H1 (cell line): ENCODE measurements at regions of chr10 and their contacts with region 1.

Region 1: GRCh38 chr10:7687228-7687907 is 15.7 kb upstream of the ITIH2 start:
- DNase-seq: peak; percentile 77 to 80
- H3K4me3 ChIP-seq: no peak overlapping the region
- H3K27ac ChIP-seq: no peak overlapping the region
- H3K4me1 ChIP-seq: no peaks in the 10 kb centered on the region
- H3K27me3 ChIP-seq: no peaks in the 10 kb centered on the region
- CTCF ChIP-seq: peak; percentile 86 to 99 (median 95)
- EP300 ChIP-seq: peak in 1 of 2 experiments; percentile 22; a peak in 1 of 3 replicates
- POLR2A ChIP-seq: no peak
- RAD21 ChIP-seq: peak; percentile 96 to 98

Region 2: DNA sequence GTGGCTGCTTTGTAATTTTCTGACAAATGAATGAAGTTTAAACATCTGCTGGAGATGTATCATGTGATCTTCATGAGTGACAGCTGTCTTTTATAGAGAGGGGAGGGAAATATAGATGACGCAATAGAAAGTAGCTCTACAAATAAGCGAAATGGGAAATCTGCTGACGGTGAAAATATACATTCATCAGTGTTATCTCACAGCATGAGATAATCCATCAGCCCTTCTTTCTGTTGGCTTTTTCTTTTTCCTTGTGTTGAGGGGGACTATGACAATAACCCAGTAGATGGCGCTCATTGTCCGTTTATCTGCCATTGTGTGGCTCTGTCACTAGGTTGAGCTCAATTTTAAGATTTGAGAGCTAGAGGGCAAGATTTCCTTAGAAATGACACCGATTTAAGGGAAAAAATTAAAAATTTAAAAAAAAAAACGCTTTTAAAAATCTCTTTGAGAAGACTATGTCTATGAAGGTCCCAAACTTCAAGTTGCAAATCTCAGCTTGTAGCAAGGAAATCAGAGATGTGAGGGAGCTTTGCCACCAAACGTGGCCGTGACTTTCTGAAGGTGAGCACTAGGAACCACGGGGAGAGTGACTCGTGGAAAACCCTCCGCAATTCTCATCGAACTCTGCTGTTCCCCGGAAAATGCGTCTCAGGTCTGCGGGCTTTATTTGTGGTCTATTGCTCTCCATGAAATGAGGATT is 161.9 kb before region 1 on chr10:
- CTCF ChIA-PET with region 1: interaction called, 88 read pairs
- POLR2A ChIA-PET with region 1: no interaction called
- DNase-seq: peak in 1 of 2 experiments; percentile 67
- H3K4me3 ChIP-seq: no peak overlapping the region
- H3K27ac ChIP-seq: no peak overlapping the region
- H3K4me1 ChIP-seq: no peaks in the 10 kb centered on the region; a peak in 1 of 7 replicates
- H3K27me3 ChIP-seq: no peaks in the 10 kb centered on the region
- CTCF ChIP-seq: peak in 2 of 3 experiments; percentile 77 to 97; a peak in 3 of 4 replicates
- EP300 ChIP-seq: no peak
- POLR2A ChIP-seq: no peak
- RAD21 ChIP-seq: peak; percentile 96 to 97

Region 3: GRCh38 chr10:7587168-7587864 is 100.1 kb before region 1 on chr10:
- CTCF ChIA-PET with region 1: interaction called, 20 read pairs
- POLR2A ChIA-PET with region 1: no interaction called
- DNase-seq: no peak
- H3K4me3 ChIP-seq: no peak overlapping the region
- H3K27ac ChIP-seq: no peak overlapping the region
- H3K4me1 ChIP-seq: no peaks in the 10 kb centered on the region
- H3K27me3 ChIP-seq: no peaks in the 10 kb centered on the region
- CTCF ChIP-seq: no peak
- EP300 ChIP-seq: no peak
- POLR2A ChIP-seq: no peak
- RAD21 ChIP-seq: no peak

Region 4: DNA sequence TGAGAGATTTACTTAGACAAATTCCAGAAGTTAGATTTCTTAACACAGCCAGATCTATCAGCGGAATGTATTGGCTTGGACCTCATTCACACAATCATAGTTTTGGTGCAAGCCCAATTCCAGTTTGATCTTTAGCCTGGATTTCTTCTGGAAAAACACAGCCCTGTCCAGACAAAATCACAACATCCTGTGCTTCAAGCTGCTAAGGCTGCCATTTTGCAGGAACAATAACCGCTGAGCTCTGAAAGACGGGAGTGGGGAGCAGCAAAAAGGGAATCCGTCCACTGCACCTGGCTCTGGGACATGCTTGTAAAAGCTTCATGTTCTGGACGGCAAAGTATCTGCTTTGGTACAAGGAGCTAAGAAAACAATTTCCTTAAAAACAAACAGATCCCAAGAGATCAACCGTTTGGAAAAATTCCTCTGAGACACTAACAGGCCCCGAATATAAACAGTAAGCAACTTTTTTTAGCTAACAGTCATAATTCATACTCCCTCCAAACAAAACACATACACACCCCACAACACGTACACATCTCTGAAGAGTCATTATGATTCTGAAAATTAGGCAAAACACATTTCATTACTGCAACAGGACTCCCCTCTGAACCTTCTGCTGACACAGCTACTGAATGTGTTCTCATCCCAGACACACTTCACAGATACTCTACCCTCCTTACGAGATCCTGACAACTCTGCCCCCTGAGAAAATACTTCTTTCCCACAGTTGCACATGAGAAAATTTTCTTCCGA is 53.0 kb before region 1 on chr10:
- CTCF ChIA-PET with region 1: interaction called, 44 read pairs
- POLR2A ChIA-PET with region 1: no interaction called
- DNase-seq: no peak
- H3K4me3 ChIP-seq: no peak overlapping the region
- H3K27ac ChIP-seq: no peak overlapping the region
- H3K4me1 ChIP-seq: peaks cover 0 to 14% (median 9%) of the 10 kb centered on the region in 4 experiments; a peak in 5 of 7 replicates
- H3K27me3 ChIP-seq: no peaks in the 10 kb centered on the region
- CTCF ChIP-seq: no peak
- EP300 ChIP-seq: no peak
- POLR2A ChIP-seq: no peak
- RAD21 ChIP-seq: no peak

Region 5: GRCh38 chr10:7672341-7673134 is 14.8 kb before region 1 on chr10:
- CTCF ChIA-PET with region 1: interaction called, 22 read pairs
- POLR2A ChIA-PET with region 1: interaction called, 3 read pairs
- DNase-seq: no peak
- H3K4me3 ChIP-seq: no peak overlapping the region
- H3K27ac ChIP-seq: no peak overlapping the region
- H3K4me1 ChIP-seq: no peaks in the 10 kb centered on the region; a peak in 1 of 7 replicates
- H3K27me3 ChIP-seq: peaks cover 0 to 2% (median 0%) of the 10 kb centered on the region in 4 experiments; a peak in 3 of 7 replicates
- CTCF ChIP-seq: no peak
- EP300 ChIP-seq: no peak
- POLR2A ChIP-seq: no peak
- RAD21 ChIP-seq: no peak